Spleen (tissue), 13 donors: ENCODE measurements at regions of chr5 and their contacts with region 1.

Region 1: GRCh38 chr5:153700940-153701339 is 210.5 kb downstream of the GRIA1 start:
- DNase-seq: no peak
- H3K4me3 ChIP-seq: no peak overlapping the region
- H3K27ac ChIP-seq: no peak overlapping the region
- H3K4me1 ChIP-seq: no peaks in the 10 kb centered on the region
- H3K27me3 ChIP-seq: peaks cover 0 to 3% (median 0%) of the 10 kb centered on the region in 7 donors
- CTCF ChIP-seq: no peak
- POLR2A ChIP-seq: no peak

Region 2: GRCh38 chr5:153504726-153505125 is 196.2 kb before region 1 on chr5:
- intact Hi-C with region 1: loop called (anchors 10 kb)
- DNase-seq: no peak
- H3K4me3 ChIP-seq: no peak overlapping the region
- H3K27ac ChIP-seq: no peak overlapping the region
- H3K4me1 ChIP-seq: no peaks in the 10 kb centered on the region
- H3K27me3 ChIP-seq: no peaks in the 10 kb centered on the region
- CTCF ChIP-seq: no peak
- POLR2A ChIP-seq: no peak

Region 3: GRCh38 chr5:153938191-153938842 is 237.4 kb after region 1 on chr5:
- intact Hi-C with region 1: no loop called
- DNase-seq: no peak
- H3K4me3 ChIP-seq: no peak overlapping the region
- H3K27ac ChIP-seq: no peak overlapping the region
- H3K4me1 ChIP-seq: no peaks in the 10 kb centered on the region
- H3K27me3 ChIP-seq: no peaks in the 10 kb centered on the region
- CTCF ChIP-seq: no peak
- POLR2A ChIP-seq: no peak

Region 4: DNA sequence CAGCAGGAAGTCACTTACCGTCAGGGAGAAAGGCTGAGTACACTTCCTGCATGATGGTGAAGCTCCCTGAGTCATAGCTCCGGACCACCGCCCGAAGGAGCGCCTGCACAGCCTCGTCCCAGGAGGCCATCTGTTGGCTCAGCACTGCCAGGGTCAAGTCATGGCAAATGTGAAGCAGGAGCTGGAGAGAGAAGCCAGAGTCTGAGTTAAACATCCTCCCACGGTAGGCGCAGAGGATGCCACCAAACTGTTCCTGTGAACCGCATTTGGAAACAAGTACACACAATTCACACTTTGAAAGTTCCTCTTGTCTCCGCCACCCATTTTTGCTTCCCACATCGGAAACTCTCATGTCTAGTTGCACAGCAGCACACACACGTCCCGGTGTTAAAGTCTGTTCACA is 1191.4 kb after region 1 on chr5:
- intact Hi-C with region 1: no loop called
- DNase-seq: no peak
- H3K4me3 ChIP-seq: no peak overlapping the region
- H3K27ac ChIP-seq: no peak overlapping the region
- H3K4me1 ChIP-seq: no peaks in the 10 kb centered on the region
- H3K27me3 ChIP-seq: no peaks in the 10 kb centered on the region
- CTCF ChIP-seq: no peak
- POLR2A ChIP-seq: no peak